Heart right ventricle (tissue), 16 donors: ENCODE measurements at regions of chr13 and their contacts with region 1.

Region 1: DNA sequence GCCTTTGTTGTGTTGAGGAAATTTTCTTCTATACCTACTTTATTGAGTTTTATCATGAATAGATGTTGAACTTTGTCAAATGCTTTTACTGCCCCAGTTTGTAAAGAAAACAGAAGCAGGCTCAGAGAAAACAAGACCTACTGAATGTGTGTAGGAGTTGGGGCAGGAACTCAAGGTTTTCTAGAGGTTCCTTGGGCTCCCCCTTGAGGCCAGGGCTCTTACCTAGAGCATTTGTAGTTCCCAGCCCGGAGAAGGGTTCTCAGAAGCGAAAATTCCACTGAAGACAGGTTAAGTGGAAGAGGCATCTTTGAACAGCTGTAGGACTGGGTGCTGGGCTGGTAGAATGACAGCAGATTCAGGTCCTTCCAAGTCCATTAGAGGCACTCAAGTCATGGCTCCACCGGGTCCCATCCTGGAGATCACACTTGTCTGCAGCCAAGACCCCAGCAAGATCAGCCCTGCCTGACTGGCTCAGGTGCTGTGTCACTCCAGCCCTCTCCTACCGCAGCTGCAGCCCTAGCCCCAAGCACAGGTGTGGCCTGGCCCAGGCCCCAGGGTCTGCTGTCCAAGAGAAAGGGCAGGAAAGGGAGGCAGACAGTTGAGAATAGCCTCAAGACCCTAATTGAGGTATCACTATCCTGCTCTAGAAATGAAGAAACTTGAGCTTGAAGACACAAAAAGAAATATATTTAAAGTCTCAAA is 425.5 kb downstream of the PCDH20 start:
- DNase-seq: no peak
- ATAC-seq: no peak
- H3K4me3 ChIP-seq: no peak overlapping the region
- H3K27ac ChIP-seq: no peak overlapping the region
- H3K4me1 ChIP-seq: no peaks in the 10 kb centered on the region
- H3K27me3 ChIP-seq: no peaks in the 10 kb centered on the region
- CTCF ChIP-seq: no peak

Region 2: GRCh38 chr13:60869941-60870613 is 120.1 kb before region 1 on chr13:
- intact Hi-C with region 1: no loop called
- DNase-seq: peak in 1 of 2 donors; percentile 12
- ATAC-seq: peak in 2 of 8 donors; percentile 33 to 68
- H3K4me3 ChIP-seq: no peak overlapping the region
- H3K27ac ChIP-seq: no peak overlapping the region
- H3K4me1 ChIP-seq: no peaks in the 10 kb centered on the region
- H3K27me3 ChIP-seq: no peaks in the 10 kb centered on the region
- CTCF ChIP-seq: no peak

Region 3: DNA sequence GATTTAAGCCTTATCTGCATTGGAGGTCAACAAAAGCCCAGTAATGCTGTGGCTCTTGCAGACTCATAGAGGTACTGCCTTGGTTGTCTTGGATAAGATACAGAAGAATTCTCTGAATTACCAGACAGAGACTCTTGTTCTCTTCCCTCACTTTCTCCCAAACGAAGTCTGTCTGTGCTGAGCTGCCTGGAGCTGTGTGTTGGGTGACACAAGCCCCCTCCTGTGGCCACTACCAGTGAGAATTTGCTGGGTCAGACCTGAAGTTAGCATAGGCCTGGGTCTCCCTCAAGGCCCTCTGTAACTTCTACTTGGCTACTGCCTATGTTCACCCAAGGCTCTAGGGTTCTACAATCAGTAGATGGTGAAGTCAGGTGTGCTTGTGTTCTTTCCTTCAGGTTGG is 12.5 kb after region 1 on chr13:
- intact Hi-C with region 1: loop called in 1 of 10 experiments (anchors 1 kb)
- DNase-seq: no peak
- ATAC-seq: no peak
- H3K4me3 ChIP-seq: no peak overlapping the region
- H3K27ac ChIP-seq: no peak overlapping the region
- H3K4me1 ChIP-seq: no peaks in the 10 kb centered on the region
- H3K27me3 ChIP-seq: no peaks in the 10 kb centered on the region
- CTCF ChIP-seq: no peak